Esophagus muscularis mucosa (tissue), 4 donors: ENCODE measurements at regions of chr18 and their contacts with region 1.

Region 1: GRCh38 chr18:44679056-44679905 is 1.4 kb upstream of the SETBP1 start:
- DNase-seq: peak; percentile 97
- H3K4me3 ChIP-seq: peak overlapping the region; percentile 85 to 94 (median 92)
- H3K27ac ChIP-seq: peak overlapping the region; percentile 97 to 98 (median 98)
- H3K4me1 ChIP-seq: peaks cover 9 to 39% (median 34%) of the 10 kb centered on the region in 4 donors
- H3K27me3 ChIP-seq: no peaks in the 10 kb centered on the region
- CTCF ChIP-seq: peak; percentile 67 to 69 (median 68)
- EP300 ChIP-seq: no peak
- POLR2A ChIP-seq: peak; percentile 75

Region 2: DNA sequence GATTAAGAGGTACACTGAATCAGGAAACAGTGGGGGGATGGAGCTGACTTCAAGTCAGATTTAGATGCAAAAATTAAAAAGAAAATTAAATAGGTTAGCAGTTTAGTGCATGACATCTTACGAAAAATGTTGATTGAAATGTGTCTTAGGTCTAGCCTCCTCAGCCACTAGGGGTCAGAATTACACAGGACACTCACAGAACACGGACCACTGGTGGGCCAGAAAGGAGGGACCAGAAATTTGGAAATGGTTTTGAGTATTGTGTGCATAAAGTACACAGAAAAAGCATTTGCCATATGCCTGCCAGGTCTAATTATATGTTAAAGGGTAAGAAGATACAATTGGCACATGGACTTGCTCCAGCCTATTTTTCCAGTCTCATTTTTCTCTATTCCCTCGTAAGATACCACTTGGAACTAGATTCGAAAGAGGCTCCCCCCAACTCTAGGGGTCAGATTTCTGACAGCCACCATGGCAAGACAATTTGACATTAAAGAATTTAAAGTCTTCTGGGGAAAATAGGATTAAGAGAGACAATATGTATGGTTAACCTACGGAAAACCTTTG is 548.8 kb before region 1 on chr18:
- intact Hi-C with region 1: loop called (anchors 5 kb)
- DNase-seq: no peak
- H3K4me3 ChIP-seq: no peak overlapping the region
- H3K27ac ChIP-seq: no peak overlapping the region
- H3K4me1 ChIP-seq: peaks cover 0 to 6% (median 3%) of the 10 kb centered on the region in 4 donors
- H3K27me3 ChIP-seq: no peaks in the 10 kb centered on the region
- CTCF ChIP-seq: peak; percentile 54 to 67 (median 57)
- EP300 ChIP-seq: no peak
- POLR2A ChIP-seq: no peak

Region 3: GRCh38 chr18:44637210-44638051 is 41.9 kb before region 1 on chr18:
- intact Hi-C with region 1: no loop called
- DNase-seq: no peak
- H3K4me3 ChIP-seq: no peak overlapping the region
- H3K27ac ChIP-seq: peak overlapping the region; percentile 11 to 32 (median 22)
- H3K4me1 ChIP-seq: peaks cover 0 to 26% (median 11%) of the 10 kb centered on the region in 4 donors
- H3K27me3 ChIP-seq: no peaks in the 10 kb centered on the region
- CTCF ChIP-seq: no peak
- EP300 ChIP-seq: no peak
- POLR2A ChIP-seq: no peak

Region 4: GRCh38 chr18:44803019-44803650 is 123.9 kb after region 1 on chr18:
- intact Hi-C with region 1: loop called (anchors 5 kb)
- DNase-seq: no peak
- H3K4me3 ChIP-seq: no peak overlapping the region
- H3K27ac ChIP-seq: peak overlapping the region; percentile 79 to 91 (median 88)
- H3K4me1 ChIP-seq: peaks cover 24 to 75% (median 61%) of the 10 kb centered on the region in 4 donors
- H3K27me3 ChIP-seq: no peaks in the 10 kb centered on the region
- CTCF ChIP-seq: no peak
- EP300 ChIP-seq: peak; percentile 94
- POLR2A ChIP-seq: no peak

Region 5: GRCh38 chr18:45014047-45014501 is 334.8 kb after region 1 on chr18:
- intact Hi-C with region 1: loop called (anchors 5 kb)
- DNase-seq: no peak
- H3K4me3 ChIP-seq: no peak overlapping the region
- H3K27ac ChIP-seq: peak overlapping the region; percentile 23 to 50 (median 38)
- H3K4me1 ChIP-seq: peaks cover 24 to 55% (median 51%) of the 10 kb centered on the region in 4 donors
- H3K27me3 ChIP-seq: no peaks in the 10 kb centered on the region
- CTCF ChIP-seq: peak in 1 of 3 experiments; percentile 35
- EP300 ChIP-seq: no peak
- POLR2A ChIP-seq: no peak

Region 6: GRCh38 chr18:45255197-45255890 is 576.1 kb after region 1 on chr18:
- intact Hi-C with region 1: loop called (anchors 10 kb)
- DNase-seq: no peak
- H3K4me3 ChIP-seq: no peak overlapping the region
- H3K27ac ChIP-seq: peak overlapping the region; percentile 46 to 66 (median 54)
- H3K4me1 ChIP-seq: peaks cover 23 to 61% (median 57%) of the 10 kb centered on the region in 4 donors
- H3K27me3 ChIP-seq: no peaks in the 10 kb centered on the region
- CTCF ChIP-seq: no peak
- EP300 ChIP-seq: no peak
- POLR2A ChIP-seq: no peak

Region 7: DNA sequence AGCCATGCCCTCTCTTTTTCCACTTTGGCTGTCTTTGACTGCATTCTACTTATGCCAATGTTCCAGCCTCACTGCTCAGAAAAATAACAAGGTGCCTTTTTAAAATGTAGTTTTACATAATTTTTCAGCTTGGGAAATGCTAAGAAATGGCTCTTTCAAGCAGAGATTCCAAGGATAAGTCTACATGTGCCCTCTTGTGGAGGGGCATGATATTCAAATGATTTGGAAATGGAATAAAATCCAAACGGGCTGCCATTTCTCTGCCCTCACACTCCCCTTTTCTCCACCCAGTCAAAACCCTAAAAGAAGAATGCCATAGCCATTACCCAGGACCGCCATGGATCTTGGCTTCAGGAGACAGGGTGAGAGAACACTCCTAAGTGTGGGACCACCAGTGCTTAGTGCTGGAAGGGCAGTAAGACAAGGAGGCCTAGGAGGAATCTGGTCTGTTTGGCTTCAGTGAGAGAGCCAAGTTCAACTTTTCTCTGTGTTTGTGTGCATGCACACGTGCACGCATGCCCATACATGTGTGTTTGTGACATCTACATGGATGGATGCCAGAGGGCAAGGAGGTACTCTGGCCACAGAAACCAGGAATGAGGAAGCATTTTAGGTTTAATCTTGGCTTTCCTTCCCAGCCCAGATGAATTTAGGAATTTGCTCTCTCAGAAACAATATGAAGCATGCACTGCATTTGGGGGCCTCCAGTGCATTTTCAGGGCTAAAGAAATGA is 762.0 kb after region 1 on chr18:
- intact Hi-C with region 1: loop called (anchors 10 kb)
- DNase-seq: no peak
- H3K4me3 ChIP-seq: no peak overlapping the region
- H3K27ac ChIP-seq: no peak overlapping the region
- H3K4me1 ChIP-seq: peaks cover 0 to 45% (median 28%) of the 10 kb centered on the region in 4 donors
- H3K27me3 ChIP-seq: no peaks in the 10 kb centered on the region
- CTCF ChIP-seq: peak; percentile 44 to 49 (median 48)
- EP300 ChIP-seq: no peak
- POLR2A ChIP-seq: no peak